CD8-positive, alpha-beta T cell (primary cell): ENCODE measurements at regions of chr4 and their contacts with region 1.

Region 1: GRCh38 chr4:159201168-159201567 is 98.3 kb downstream of the RAPGEF2 start:
- DNase-seq: no peak
- ATAC-seq: no peak
- H3K4me3 ChIP-seq: no peak overlapping the region
- H3K4me3 Mint-ChIP-seq: no peak overlapping the region
- H3K27ac ChIP-seq: no peak overlapping the region
- H3K27ac Mint-ChIP-seq: no peak overlapping the region
- H3K4me1 ChIP-seq: no peaks in the 10 kb centered on the region
- H3K4me1 Mint-ChIP-seq: peaks cover 12% of the 10 kb centered on the region
- H3K27me3 ChIP-seq: no peaks in the 10 kb centered on the region
- H3K27me3 Mint-ChIP-seq: no peaks in the 10 kb centered on the region
- CTCF ChIP-seq: no peak

Region 2: GRCh38 chr4:159212675-159213293 is 11.6 kb after region 1 on chr4:
- CTCF ChIA-PET with region 1: interaction called, 27 read pairs
- POLR2A ChIA-PET with region 1: no interaction called
- intact Hi-C with region 1: no loop called
- DNase-seq: no peak
- ATAC-seq: no peak
- H3K4me3 ChIP-seq: no peak overlapping the region
- H3K4me3 Mint-ChIP-seq: no peak overlapping the region
- H3K27ac ChIP-seq: no peak overlapping the region
- H3K27ac Mint-ChIP-seq: no peak overlapping the region
- H3K4me1 ChIP-seq: no peaks in the 10 kb centered on the region
- H3K4me1 Mint-ChIP-seq: no peaks in the 10 kb centered on the region
- H3K27me3 ChIP-seq: no peaks in the 10 kb centered on the region
- H3K27me3 Mint-ChIP-seq: no peaks in the 10 kb centered on the region
- CTCF ChIP-seq: no peak

Region 3: DNA sequence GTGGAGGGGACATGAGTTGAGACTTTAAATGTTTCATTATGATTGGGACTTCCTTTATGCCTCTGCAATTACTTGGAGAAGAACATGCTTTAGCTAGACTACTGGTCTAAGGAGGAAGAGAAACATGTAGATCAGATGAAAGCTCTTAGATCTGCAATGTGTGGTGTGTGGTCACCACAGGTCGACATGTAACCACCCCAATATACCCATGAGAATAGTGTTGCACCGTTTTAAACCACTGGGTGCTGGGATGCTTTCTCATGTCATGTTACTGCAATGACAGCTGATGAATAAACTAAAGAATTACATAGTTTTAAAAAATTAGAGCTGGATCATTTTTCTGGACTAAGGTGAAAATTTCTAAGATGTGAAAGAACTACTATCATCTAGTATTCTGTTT is 941.4 kb after region 1 on chr4:
- CTCF ChIA-PET with region 1: no interaction called
- POLR2A ChIA-PET with region 1: no interaction called
- intact Hi-C with region 1: no loop called
- DNase-seq: no peak
- ATAC-seq: no peak
- H3K4me3 ChIP-seq: no peak overlapping the region
- H3K4me3 Mint-ChIP-seq: no peak overlapping the region
- H3K27ac ChIP-seq: no peak overlapping the region
- H3K27ac Mint-ChIP-seq: no peak overlapping the region
- H3K4me1 ChIP-seq: no peaks in the 10 kb centered on the region
- H3K4me1 Mint-ChIP-seq: no peaks in the 10 kb centered on the region
- H3K27me3 ChIP-seq: no peaks in the 10 kb centered on the region
- H3K27me3 Mint-ChIP-seq: no peaks in the 10 kb centered on the region
- CTCF ChIP-seq: no peak